CD8-positive, alpha-beta T cell (primary cell): ENCODE measurements at regions of chr17 and their contacts with region 1.

Region 1: DNA sequence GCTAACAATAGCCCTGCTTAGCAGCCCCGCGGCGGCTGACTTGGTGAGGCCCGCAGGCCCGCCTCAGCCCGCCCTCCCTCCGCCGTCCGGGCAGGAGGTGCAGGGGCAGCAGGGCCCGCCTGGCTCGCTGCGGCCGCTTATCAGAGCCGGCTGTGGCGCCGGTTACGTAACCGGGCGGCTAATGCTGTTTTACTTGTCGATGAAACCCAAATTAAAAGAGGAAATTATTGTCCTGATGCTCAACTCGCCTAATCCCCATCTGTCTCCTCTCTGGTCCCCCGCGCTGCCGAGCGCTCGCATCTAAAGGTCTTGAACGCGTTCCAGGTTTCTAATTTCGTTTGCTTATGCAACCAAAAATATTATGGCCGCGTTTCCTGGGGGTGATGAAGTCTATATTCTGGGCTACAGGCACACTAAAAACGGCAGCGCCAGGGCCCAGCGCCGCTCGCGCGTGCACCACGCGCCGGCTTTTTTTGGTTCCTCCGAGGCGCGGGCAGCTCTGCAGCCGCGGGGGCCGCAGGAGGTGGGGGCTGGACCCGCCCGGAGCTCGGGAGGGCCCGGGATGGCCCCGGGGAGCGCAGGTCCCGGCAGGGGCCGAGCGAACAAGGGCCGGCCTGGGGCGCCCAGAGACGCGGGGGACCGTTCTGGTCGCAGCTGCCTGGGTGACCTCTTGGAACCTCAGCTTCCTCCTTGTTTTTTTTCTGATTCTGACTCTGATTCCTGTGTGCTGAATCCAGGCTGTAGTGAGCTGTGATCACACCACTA is 65.2 kb upstream of the TOB1 start:
- DNase-seq: peak in 7 of 9 experiments; percentile 39 to 79 (median 56)
- ATAC-seq: peak; percentile 75
- H3K4me3 ChIP-seq: peak overlapping the region; percentile 46 to 55
- H3K4me3 Mint-ChIP-seq: peak overlapping the region; percentile 90
- H3K27ac ChIP-seq: peak overlapping the region; percentile 71
- H3K27ac Mint-ChIP-seq: peak overlapping the region; percentile 99
- H3K4me1 ChIP-seq: peaks cover 30% of the 10 kb centered on the region
- H3K4me1 Mint-ChIP-seq: peaks cover 41% of the 10 kb centered on the region
- H3K27me3 ChIP-seq: no peaks in the 10 kb centered on the region
- H3K27me3 Mint-ChIP-seq: no peaks in the 10 kb centered on the region
- CTCF ChIP-seq: no peak

Region 2: DNA sequence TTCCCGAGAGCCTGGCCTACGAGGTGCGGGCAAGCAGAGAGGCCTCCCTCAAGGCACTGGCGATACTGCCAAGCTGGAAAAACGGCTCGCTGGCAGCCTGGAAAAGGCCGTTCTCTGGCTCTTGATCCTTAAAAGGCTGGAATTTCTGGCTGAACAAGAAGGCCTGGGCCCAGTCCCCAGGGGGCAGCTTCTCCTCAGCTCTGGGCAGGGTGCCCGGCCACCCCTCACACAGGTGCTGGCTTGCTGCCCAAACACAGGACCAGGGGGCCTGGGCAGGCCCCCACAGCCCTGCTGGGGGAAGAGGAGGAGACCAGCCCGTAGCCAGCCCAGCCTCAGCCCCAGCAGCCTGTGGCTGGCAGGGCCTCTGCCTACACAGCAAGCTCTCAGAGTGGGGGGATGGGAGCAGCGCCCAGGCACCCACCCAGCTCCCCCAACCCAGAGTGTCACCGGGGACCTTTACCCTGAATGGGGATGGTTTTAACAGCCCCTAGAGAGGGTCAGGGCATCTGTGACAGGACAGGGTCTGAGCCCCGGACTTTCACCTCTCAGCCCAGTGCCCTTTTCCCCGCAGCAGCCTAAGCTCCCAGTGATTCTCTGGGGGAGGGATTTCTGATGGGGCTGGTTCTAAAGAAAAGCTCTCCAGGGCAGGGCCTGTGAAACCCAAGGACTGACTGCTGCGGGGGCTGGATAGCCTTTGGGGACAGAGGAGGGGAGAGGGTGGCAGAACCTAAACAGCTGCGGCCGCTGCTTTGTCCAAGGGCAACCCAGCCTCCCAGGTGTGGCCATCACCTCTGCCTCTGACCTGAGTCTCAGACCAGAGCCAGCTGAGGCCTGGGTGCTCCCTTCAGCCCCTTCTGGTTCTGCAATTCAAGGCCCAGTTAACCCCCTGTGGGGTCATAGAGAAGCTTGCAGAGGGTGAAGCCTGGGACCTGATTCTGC is 26.5 kb before region 1 on chr17:
- CTCF ChIA-PET with region 1: interaction called, 3 read pairs
- POLR2A ChIA-PET with region 1: interaction called, 5 read pairs
- intact Hi-C with region 1: loop called (anchors 1 to 5 kb)
- DNase-seq: peak in 1 of 9 experiments; percentile 29
- ATAC-seq: no peak
- H3K4me3 ChIP-seq: no peak overlapping the region
- H3K4me3 Mint-ChIP-seq: no peak overlapping the region
- H3K27ac ChIP-seq: peak overlapping the region; percentile 46 to 73
- H3K27ac Mint-ChIP-seq: peak overlapping the region; percentile 89
- H3K4me1 ChIP-seq: peaks cover 67% of the 10 kb centered on the region
- H3K4me1 Mint-ChIP-seq: peaks cover 61% of the 10 kb centered on the region
- H3K27me3 ChIP-seq: no peaks in the 10 kb centered on the region
- H3K27me3 Mint-ChIP-seq: no peaks in the 10 kb centered on the region
- CTCF ChIP-seq: no peak

Region 3: GRCh38 chr17:50909765-50910605 is 21.3 kb before region 1 on chr17:
- CTCF ChIA-PET with region 1: interaction called, 3 read pairs
- POLR2A ChIA-PET with region 1: interaction called, 5 read pairs
- intact Hi-C with region 1: loop called (anchors 1 to 2 kb)
- DNase-seq: peak; percentile 71 to 94 (median 77)
- ATAC-seq: peak; percentile 87
- H3K4me3 ChIP-seq: peak overlapping the region in 1 of 2 experiments; percentile 24
- H3K4me3 Mint-ChIP-seq: peak overlapping the region; percentile 55
- H3K27ac ChIP-seq: peak overlapping the region; percentile 83 to 92
- H3K27ac Mint-ChIP-seq: peak overlapping the region; percentile 93
- H3K4me1 ChIP-seq: peaks cover 74% of the 10 kb centered on the region
- H3K4me1 Mint-ChIP-seq: peaks cover 61% of the 10 kb centered on the region
- H3K27me3 ChIP-seq: no peaks in the 10 kb centered on the region
- H3K27me3 Mint-ChIP-seq: no peaks in the 10 kb centered on the region
- CTCF ChIP-seq: no peak

Region 4: DNA sequence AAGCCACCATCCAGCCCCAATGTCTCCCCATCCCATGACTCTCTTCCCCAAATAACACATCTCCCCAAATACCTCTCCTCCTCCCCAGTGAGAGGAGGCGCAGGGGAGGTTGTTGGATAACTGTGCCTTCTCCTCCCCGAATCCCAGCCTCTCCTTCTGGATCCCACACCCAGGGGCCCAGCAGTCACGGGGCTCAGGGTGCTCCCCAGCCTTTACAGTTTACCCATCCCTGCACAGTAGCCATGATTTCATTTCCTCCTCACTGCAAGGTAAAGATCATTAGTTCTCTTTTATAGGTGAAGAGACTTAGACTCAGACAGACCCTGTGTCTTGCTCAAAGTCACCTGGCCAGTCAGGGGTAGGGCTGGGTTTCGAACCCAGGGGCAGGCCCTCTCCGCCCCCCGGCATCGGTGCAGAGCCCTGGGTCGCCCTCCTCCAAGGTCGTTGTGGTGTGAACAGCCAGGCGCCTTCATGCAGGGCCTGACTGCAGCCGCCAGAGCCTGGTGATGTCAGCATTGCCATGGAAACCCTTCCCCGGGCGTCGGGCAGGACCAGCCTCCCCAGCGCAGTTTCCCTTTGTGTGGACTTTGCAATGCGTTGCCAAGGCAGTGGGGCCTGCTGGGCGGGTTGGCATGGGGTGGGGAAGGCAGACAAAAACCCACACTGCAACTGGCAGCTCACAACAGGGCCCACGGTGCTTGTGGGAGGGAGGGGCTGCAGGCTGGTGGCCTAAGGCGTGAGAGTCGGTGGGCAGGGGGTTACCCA is 11.8 kb before region 1 on chr17:
- CTCF ChIA-PET with region 1: interaction called, 10 read pairs
- POLR2A ChIA-PET with region 1: interaction called, 9 read pairs
- intact Hi-C with region 1: no loop called
- DNase-seq: peak; percentile 69 to 96 (median 86)
- ATAC-seq: peak; percentile 83
- H3K4me3 ChIP-seq: peak overlapping the region in 1 of 2 experiments; percentile 17
- H3K4me3 Mint-ChIP-seq: peak overlapping the region; percentile 69
- H3K27ac ChIP-seq: peak overlapping the region; percentile 86 to 89
- H3K27ac Mint-ChIP-seq: peak overlapping the region; percentile 94
- H3K4me1 ChIP-seq: peaks cover 50% of the 10 kb centered on the region
- H3K4me1 Mint-ChIP-seq: peaks cover 40% of the 10 kb centered on the region
- H3K27me3 ChIP-seq: no peaks in the 10 kb centered on the region
- H3K27me3 Mint-ChIP-seq: no peaks in the 10 kb centered on the region
- CTCF ChIP-seq: no peak

Region 5: GRCh38 chr17:50967795-50968194 is 36.5 kb after region 1 on chr17:
- CTCF ChIA-PET with region 1: no interaction called
- POLR2A ChIA-PET with region 1: no interaction called
- intact Hi-C with region 1: no loop called
- DNase-seq: no peak
- ATAC-seq: no peak
- H3K4me3 ChIP-seq: no peak overlapping the region
- H3K4me3 Mint-ChIP-seq: no peak overlapping the region
- H3K27ac ChIP-seq: no peak overlapping the region
- H3K27ac Mint-ChIP-seq: no peak overlapping the region
- H3K4me1 ChIP-seq: no peaks in the 10 kb centered on the region
- H3K4me1 Mint-ChIP-seq: peaks cover 4% of the 10 kb centered on the region
- H3K27me3 ChIP-seq: no peaks in the 10 kb centered on the region
- H3K27me3 Mint-ChIP-seq: no peaks in the 10 kb centered on the region
- CTCF ChIP-seq: no peak